ENCODE measurements at regions of chr6 and their contacts with region 1.

Region 1: DNA sequence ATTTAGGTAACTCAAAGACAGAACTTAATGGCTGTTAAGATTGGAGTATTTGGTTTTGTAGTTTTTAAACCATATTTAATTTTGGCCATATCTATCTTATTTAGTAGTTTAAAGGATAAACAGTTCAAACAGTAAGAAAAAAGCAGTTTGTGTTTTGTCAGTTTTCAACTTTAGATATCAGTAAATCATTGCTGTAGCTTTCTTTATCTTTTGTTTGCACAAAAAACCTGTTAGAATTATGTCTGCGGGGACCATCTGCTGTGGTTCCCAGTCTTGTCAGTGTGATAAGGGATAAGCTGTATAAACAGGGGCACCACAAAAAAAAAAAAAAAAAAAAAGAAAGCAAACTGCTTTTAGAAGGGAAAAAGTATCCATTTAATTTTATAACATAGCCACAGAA is 40.9 kb downstream of the CDKAL1 start:
- DNase-seq: no peak
- ATAC-seq: no peak
- H3K4me3 ChIP-seq: no peak overlapping the region
- H3K4me3 Mint-ChIP-seq: no peak overlapping the region
- H3K27ac ChIP-seq: no peak overlapping the region
- H3K27ac Mint-ChIP-seq: no peak overlapping the region
- H3K4me1 ChIP-seq: no peaks in the 10 kb centered on the region
- H3K4me1 Mint-ChIP-seq: peaks cover 14% of the 10 kb centered on the region
- H3K27me3 ChIP-seq: no peaks in the 10 kb centered on the region
- H3K27me3 Mint-ChIP-seq: no peaks in the 10 kb centered on the region
- CTCF ChIP-seq: no peak

Region 2: DNA sequence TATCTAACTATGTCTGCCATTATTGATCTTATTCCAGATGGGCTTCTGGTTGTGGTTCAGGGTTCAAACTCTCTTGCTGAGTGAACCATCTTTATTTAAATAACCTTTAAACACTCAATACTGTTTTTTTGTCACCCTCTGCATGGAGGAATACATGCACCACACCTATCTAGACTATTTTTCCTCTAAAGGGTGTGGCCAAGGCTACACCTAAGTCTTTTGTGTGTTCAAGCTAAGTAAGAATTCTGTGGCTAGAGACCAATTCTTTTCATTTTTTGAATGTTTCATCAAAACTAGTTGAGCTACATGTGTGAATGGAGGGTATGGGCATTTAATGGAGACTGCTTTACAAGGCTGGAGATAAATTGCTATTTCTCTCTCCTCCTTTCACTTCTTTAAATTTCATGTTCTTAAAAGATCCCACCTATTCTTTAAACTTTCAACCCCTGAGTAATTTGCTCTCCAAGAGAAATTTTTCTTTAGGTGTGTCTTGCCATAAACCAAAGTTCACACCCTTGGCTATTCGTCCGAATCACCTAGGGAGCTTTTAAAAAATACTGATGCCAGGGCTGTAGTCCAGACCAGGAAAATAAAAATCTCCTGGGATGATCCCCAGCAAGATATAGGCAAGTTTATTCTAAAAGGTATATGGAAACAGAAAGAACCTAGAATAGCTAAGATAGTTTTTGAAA is 338.1 kb before region 1 on chr6:
- CTCF ChIA-PET with region 1: no interaction called
- POLR2A ChIA-PET with region 1: no interaction called
- intact Hi-C with region 1: no loop called
- DNase-seq: no peak
- ATAC-seq: no peak
- H3K4me3 ChIP-seq: no peak overlapping the region
- H3K4me3 Mint-ChIP-seq: no peak overlapping the region
- H3K27ac ChIP-seq: no peak overlapping the region
- H3K27ac Mint-ChIP-seq: no peak overlapping the region
- H3K4me1 ChIP-seq: no peaks in the 10 kb centered on the region
- H3K4me1 Mint-ChIP-seq: peaks cover 13% of the 10 kb centered on the region
- H3K27me3 ChIP-seq: no peaks in the 10 kb centered on the region
- H3K27me3 Mint-ChIP-seq: no peaks in the 10 kb centered on the region
- CTCF ChIP-seq: no peak

Region 3: GRCh38 chr6:20564269-20564668 is 10.9 kb before region 1 on chr6:
- CTCF ChIA-PET with region 1: interaction called, 16 read pairs
- POLR2A ChIA-PET with region 1: no interaction called
- intact Hi-C with region 1: no loop called
- DNase-seq: peak in 2 of 9 experiments; percentile 30 to 44
- ATAC-seq: no peak
- H3K4me3 ChIP-seq: no peak overlapping the region
- H3K4me3 Mint-ChIP-seq: no peak overlapping the region
- H3K27ac ChIP-seq: no peak overlapping the region
- H3K27ac Mint-ChIP-seq: no peak overlapping the region
- H3K4me1 ChIP-seq: peaks cover 4% of the 10 kb centered on the region
- H3K4me1 Mint-ChIP-seq: peaks cover 16% of the 10 kb centered on the region
- H3K27me3 ChIP-seq: no peaks in the 10 kb centered on the region
- H3K27me3 Mint-ChIP-seq: no peaks in the 10 kb centered on the region
- CTCF ChIP-seq: peak; percentile 87

Measured in CD8-positive, alpha-beta T cell (primary cell).